ENCODE measurements at regions of chr1 and their contacts with region 1.

Region 1: DNA sequence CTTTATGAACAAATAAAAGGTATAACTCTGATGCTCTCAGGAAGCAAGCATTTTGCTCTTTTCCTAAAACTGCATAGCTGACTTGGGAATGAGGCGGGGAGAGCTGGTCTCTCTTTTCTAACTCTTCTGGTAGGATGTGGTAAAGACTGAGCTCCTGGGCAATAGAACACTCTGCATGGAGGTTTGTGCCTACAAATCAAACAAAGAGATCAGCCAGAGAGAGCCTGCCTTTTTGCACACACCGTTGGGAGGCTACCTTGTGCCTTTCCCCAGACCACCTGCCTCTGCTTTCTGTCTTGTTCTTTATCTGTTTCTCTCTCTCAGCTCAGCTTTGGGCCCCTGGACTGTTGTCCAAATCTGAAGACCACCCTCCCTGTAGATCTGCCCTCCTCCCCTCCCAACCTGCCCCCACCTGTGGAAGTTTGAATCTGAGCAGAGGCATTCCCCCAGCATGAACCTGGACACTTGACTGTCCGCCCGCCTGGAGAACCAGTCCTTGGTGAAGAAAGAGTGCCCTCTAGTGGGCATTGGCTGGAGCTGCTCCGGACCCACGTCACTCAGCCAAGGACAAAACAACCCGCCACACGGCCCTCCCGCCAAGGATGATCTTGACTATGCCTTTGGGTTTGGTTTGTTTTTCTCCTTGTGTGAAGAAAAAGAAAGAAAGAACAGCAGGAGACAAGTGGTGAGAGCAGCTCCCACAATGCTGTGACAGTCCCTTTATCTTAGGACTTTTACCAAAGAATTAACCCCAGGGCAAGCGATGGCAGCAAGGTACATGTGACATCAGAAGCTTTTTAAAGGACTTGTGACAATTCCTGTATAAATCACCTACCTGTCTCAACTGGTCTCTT is 228.2 kb downstream of the PBX1 start:
- DNase-seq: peak; percentile 71
- H3K4me3 ChIP-seq: peak overlapping the region in 1 of 3 experiments; percentile 7
- H3K27ac ChIP-seq: no peak overlapping the region
- H3K4me1 ChIP-seq: peaks cover 27% of the 10 kb centered on the region
- H3K27me3 ChIP-seq: no peaks in the 10 kb centered on the region
- CTCF ChIP-seq: peak; percentile 96

Region 2: GRCh38 chr1:163528710-163529348 is 1258.4 kb before region 1 on chr1:
- CTCF ChIA-PET with region 1: no interaction called
- dilution Hi-C with region 1: no loop called
- in situ Hi-C with region 1: loop called in 1 of 2 experiments (anchors 25 kb)
- intact Hi-C with region 1: loop called (anchors 2 kb)
- DNase-seq: peak; percentile 5
- H3K4me3 ChIP-seq: no peak overlapping the region
- H3K27ac ChIP-seq: no peak overlapping the region
- H3K4me1 ChIP-seq: no peaks in the 10 kb centered on the region
- H3K27me3 ChIP-seq: no peaks in the 10 kb centered on the region
- CTCF ChIP-seq: peak; percentile 51 to 62

Region 3: DNA sequence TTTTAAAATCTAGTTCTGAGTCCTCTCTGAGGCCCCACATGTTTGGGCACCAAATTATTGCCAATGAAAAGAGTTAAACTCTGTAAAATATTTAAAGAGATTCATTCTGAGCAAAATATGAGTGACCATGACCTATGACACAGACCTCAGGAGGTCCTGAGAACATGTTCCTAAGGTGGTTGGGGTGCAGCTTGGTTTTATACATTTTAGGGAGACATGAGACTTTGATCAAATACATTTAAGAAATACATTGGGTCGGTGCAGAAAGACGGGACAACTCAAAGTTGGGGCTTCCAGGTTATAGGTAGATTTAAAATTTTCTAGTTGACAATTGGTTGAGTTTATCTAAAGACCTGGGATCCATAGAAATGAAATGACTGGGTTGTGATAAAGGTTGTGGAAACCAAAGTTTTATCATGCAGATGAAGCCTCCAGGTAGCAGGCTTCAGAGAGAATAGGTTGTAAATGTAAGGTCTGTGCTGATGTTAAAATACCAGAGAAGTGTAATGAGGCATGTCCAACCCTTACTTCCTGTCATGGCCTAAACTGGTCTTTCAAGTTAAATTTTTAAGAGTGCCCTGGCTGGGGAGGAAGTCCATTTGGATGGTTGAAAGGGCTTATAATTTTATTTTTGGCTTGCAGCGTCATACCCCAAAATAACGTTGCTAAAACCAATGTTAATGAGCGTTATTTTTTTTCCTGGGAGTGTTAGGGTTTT is 1190.5 kb before region 1 on chr1:
- CTCF ChIA-PET with region 1: no interaction called
- dilution Hi-C with region 1: no loop called
- in situ Hi-C with region 1: no loop called
- intact Hi-C with region 1: no loop called
- DNase-seq: no peak
- H3K4me3 ChIP-seq: no peak overlapping the region
- H3K27ac ChIP-seq: no peak overlapping the region
- H3K4me1 ChIP-seq: no peaks in the 10 kb centered on the region
- H3K27me3 ChIP-seq: no peaks in the 10 kb centered on the region
- CTCF ChIP-seq: no peak

Region 4: GRCh38 chr1:164417016-164417704 is 370.0 kb before region 1 on chr1:
- CTCF ChIA-PET with region 1: no interaction called
- dilution Hi-C with region 1: no loop called
- in situ Hi-C with region 1: no loop called
- intact Hi-C with region 1: no loop called
- DNase-seq: no peak
- H3K4me3 ChIP-seq: no peak overlapping the region
- H3K27ac ChIP-seq: no peak overlapping the region
- H3K4me1 ChIP-seq: no peaks in the 10 kb centered on the region
- H3K27me3 ChIP-seq: peaks cover 2% of the 10 kb centered on the region
- CTCF ChIP-seq: no peak

Region 5: GRCh38 chr1:164440232-164440631 is 347.0 kb before region 1 on chr1:
- CTCF ChIA-PET with region 1: no interaction called
- dilution Hi-C with region 1: no loop called
- in situ Hi-C with region 1: no loop called
- intact Hi-C with region 1: loop called (anchors 5 kb)
- DNase-seq: no peak
- H3K4me3 ChIP-seq: no peak overlapping the region
- H3K27ac ChIP-seq: no peak overlapping the region
- H3K4me1 ChIP-seq: no peaks in the 10 kb centered on the region
- H3K27me3 ChIP-seq: no peaks in the 10 kb centered on the region
- CTCF ChIP-seq: peak; percentile 12 to 31

Region 6: GRCh38 chr1:164558461-164559341 is 228.5 kb before region 1 on chr1 and contains the start of gene PBX1:
- CTCF ChIA-PET with region 1: interaction called, 5 read pairs
- dilution Hi-C with region 1: no loop called
- in situ Hi-C with region 1: no loop called
- intact Hi-C with region 1: loop called (anchors 2 kb)
- DNase-seq: peak; percentile 99
- H3K4me3 ChIP-seq: peak within 1 kb of the TSS; percentile 61 to 94 (median 73)
- H3K27ac ChIP-seq: peak within 1 kb of the TSS; percentile 69
- H3K4me1 ChIP-seq: no peaks in the 10 kb centered on the region
- H3K27me3 ChIP-seq: no peaks in the 10 kb centered on the region
- CTCF ChIP-seq: no peak
- total RNA-seq, gene PBX1: 10.2 to 14.8 TPM

Region 7: GRCh38 chr1:164707868-164708331 is 79.3 kb before region 1 on chr1:
- CTCF ChIA-PET with region 1: no interaction called
- dilution Hi-C with region 1: no loop called
- in situ Hi-C with region 1: no loop called
- intact Hi-C with region 1: loop called (anchors 2 kb)
- DNase-seq: peak; percentile 83
- H3K4me3 ChIP-seq: no peak overlapping the region
- H3K27ac ChIP-seq: no peak overlapping the region
- H3K4me1 ChIP-seq: peaks cover 22% of the 10 kb centered on the region
- H3K27me3 ChIP-seq: no peaks in the 10 kb centered on the region
- CTCF ChIP-seq: no peak

Region 8: GRCh38 chr1:165073185-165074007 is 286.2 kb after region 1 on chr1:
- CTCF ChIA-PET with region 1: no interaction called
- dilution Hi-C with region 1: no loop called
- in situ Hi-C with region 1: loop called in 1 of 2 experiments (anchors 10 kb)
- intact Hi-C with region 1: loop called (anchors 1 kb)
- DNase-seq: peak; percentile 35
- H3K4me3 ChIP-seq: no peak overlapping the region
- H3K27ac ChIP-seq: no peak overlapping the region
- H3K4me1 ChIP-seq: no peaks in the 10 kb centered on the region
- H3K27me3 ChIP-seq: peaks cover 4% of the 10 kb centered on the region
- CTCF ChIP-seq: peak; percentile 67 to 80